ENCODE measurements at regions of chr4 and their contacts with region 1.

Region 1: GRCh38 chr4:13548984-13549546 is 4.8 kb upstream of the NKX3-2 start:
- DNase-seq: peak; percentile 92
- H3K4me3 Mint-ChIP-seq: peak overlapping the region; percentile 64
- H3K27ac Mint-ChIP-seq: no peak overlapping the region
- H3K4me1 Mint-ChIP-seq: peaks cover 30% of the 10 kb centered on the region
- H3K27me3 Mint-ChIP-seq: peaks cover 63% of the 10 kb centered on the region

Region 2: GRCh38 chr4:12729384-12729783 is 819.7 kb before region 1 on chr4:
- CTCF ChIA-PET with region 1: interaction called, 8 read pairs
- POLR2A ChIA-PET with region 1: no interaction called
- intact Hi-C with region 1: loop called (anchors 1 kb)
- DNase-seq: no peak
- H3K4me3 Mint-ChIP-seq: no peak overlapping the region
- H3K27ac Mint-ChIP-seq: no peak overlapping the region
- H3K4me1 Mint-ChIP-seq: no peaks in the 10 kb centered on the region
- H3K27me3 Mint-ChIP-seq: peaks cover 14% of the 10 kb centered on the region

Region 3: DNA sequence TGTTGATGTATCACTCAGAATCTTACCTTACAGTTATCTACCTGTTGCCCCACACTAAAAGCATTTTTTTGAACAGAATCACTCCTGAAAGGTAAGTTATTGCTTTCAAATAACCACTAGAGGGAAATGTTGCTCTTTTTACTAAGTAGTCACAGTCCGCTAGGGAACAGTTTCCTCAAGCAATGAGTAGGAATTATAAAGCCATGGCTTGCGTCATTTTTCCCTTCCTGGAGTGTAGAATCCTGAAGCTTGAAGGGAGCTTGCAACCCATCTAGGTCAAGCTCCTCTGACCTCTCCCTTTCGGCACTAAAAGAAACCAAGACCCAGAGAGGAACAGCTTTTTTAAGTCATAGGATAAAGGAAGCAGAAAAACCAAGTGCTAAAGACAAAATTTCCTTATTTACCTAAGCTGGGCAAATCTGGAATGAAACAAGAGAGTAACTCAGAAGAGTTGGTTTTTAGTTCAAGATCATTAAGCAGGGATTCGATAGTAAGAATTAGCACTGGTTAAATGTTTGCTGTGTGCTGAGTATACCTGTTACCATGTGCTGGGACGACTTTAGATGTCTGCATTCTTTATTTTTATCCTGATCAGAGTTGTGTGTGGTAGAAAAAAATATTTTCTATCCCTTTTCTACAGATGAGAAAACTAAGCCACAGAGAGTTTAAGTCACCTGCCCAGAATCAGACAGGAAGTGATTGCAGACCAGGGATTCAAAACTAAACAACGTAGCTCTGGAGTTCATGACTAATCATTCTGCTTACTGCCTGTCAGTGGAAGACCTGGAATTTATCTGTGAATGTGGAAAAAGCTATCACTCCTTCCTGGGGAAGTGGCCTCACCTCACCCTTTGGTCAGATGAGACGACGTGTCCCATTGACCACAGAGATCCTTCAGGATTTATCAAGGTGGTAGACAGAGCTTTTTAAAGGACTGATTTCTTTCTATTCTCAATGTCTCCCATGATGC is 696.4 kb before region 1 on chr4:
- CTCF ChIA-PET with region 1: no interaction called
- POLR2A ChIA-PET with region 1: no interaction called
- intact Hi-C with region 1: loop called (anchors 1 kb)
- DNase-seq: no peak
- H3K4me3 Mint-ChIP-seq: no peak overlapping the region
- H3K27ac Mint-ChIP-seq: no peak overlapping the region
- H3K4me1 Mint-ChIP-seq: peaks cover 5% of the 10 kb centered on the region
- H3K27me3 Mint-ChIP-seq: peaks cover 2% of the 10 kb centered on the region

Region 4: GRCh38 chr4:13092702-13093101 is 456.4 kb before region 1 on chr4:
- CTCF ChIA-PET with region 1: no interaction called
- POLR2A ChIA-PET with region 1: no interaction called
- intact Hi-C with region 1: no loop called
- DNase-seq: no peak
- H3K4me3 Mint-ChIP-seq: no peak overlapping the region
- H3K27ac Mint-ChIP-seq: no peak overlapping the region
- H3K4me1 Mint-ChIP-seq: no peaks in the 10 kb centered on the region
- H3K27me3 Mint-ChIP-seq: no peaks in the 10 kb centered on the region

Region 5: DNA sequence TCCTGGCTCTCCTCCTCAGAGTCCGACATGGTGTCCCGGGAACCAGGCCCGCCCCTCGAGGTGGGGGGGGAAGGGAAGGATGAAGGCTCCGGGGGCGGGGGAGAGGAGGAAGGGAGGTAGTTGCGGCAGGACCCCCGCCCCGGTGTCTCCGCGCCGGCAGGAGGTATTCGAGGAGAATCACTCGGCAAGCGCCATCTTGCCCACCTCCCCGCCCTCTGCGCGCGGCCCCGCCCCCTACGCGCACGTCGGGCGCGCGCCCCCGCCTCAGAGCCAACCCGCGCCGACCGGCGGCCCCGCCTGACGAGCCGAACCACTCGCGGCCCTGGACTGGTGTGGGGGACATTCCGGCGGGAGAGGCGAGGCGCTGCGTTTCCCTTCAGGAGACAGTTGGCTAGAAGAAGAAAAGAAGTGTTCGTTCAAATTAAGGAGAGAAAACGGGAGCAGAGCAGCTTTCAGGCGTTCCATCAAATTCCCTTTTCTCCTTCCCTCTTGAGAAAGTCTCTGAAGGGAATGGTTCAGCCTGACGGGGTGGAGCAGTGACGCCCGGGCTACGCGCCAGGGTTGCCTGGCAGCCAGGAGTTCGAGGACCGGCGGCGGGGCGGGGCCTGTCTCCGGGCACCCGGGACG is 64.8 kb before region 1 on chr4 and contains the start of gene RAB28:
- CTCF ChIA-PET with region 1: interaction called, 4 read pairs
- POLR2A ChIA-PET with region 1: no interaction called
- intact Hi-C with region 1: loop called (anchors 2 kb)
- DNase-seq: peak; percentile 94
- H3K4me3 Mint-ChIP-seq: peak within 1 kb of the TSS; percentile 84
- H3K27ac Mint-ChIP-seq: peak within 1 kb of the TSS; percentile 96
- H3K4me1 Mint-ChIP-seq: peaks cover 22% of the 10 kb centered on the region
- H3K27me3 Mint-ChIP-seq: peaks cover 13% of the 10 kb centered on the region
- total RNA-seq, gene RAB28: 16.5 to 18.8 TPM

Region 6: GRCh38 chr4:13527981-13528820 is 20.9 kb before region 1 on chr4:
- CTCF ChIA-PET with region 1: interaction called, 4 read pairs
- POLR2A ChIA-PET with region 1: interaction called, 8 read pairs
- intact Hi-C with region 1: loop called (anchors 1 kb)
- DNase-seq: peak; percentile 55
- H3K4me3 Mint-ChIP-seq: peak overlapping the region; percentile 47
- H3K27ac Mint-ChIP-seq: no peak overlapping the region
- H3K4me1 Mint-ChIP-seq: peaks cover 23% of the 10 kb centered on the region
- H3K27me3 Mint-ChIP-seq: peaks cover 81% of the 10 kb centered on the region

Measured in activated CD4-positive, alpha-beta memory T cell treated with anti-CD3 and anti-CD28 coated beads for 36 hours (primary cell).